Naive thymus-derived CD4-positive, alpha-beta T cell (primary cell): ENCODE measurements at regions of chr10 and their contacts with region 1.

Region 1: GRCh38 chr10:11515596-11516430 is 95.6 kb downstream of the USP6NL start:
- DNase-seq: peak in 7 of 9 donors; percentile 45 to 75 (median 64)
- ATAC-seq: peak; percentile 81
- H3K4me3 ChIP-seq: no peak overlapping the region
- H3K4me3 Mint-ChIP-seq: no peak overlapping the region
- H3K27ac ChIP-seq: no peak overlapping the region
- H3K27ac Mint-ChIP-seq: peak overlapping the region in 1 of 9 donors; percentile 33
- H3K4me1 ChIP-seq: peaks cover 0 to 5% of the 10 kb centered on the region in 2 donors
- H3K4me1 Mint-ChIP-seq: peaks cover 0 to 16% (median 4%) of the 10 kb centered on the region in 7 donors
- H3K27me3 ChIP-seq: no peaks in the 10 kb centered on the region
- H3K27me3 Mint-ChIP-seq: peaks cover 0 to 36% (median 0%) of the 10 kb centered on the region in 5 donors

Region 2: DNA sequence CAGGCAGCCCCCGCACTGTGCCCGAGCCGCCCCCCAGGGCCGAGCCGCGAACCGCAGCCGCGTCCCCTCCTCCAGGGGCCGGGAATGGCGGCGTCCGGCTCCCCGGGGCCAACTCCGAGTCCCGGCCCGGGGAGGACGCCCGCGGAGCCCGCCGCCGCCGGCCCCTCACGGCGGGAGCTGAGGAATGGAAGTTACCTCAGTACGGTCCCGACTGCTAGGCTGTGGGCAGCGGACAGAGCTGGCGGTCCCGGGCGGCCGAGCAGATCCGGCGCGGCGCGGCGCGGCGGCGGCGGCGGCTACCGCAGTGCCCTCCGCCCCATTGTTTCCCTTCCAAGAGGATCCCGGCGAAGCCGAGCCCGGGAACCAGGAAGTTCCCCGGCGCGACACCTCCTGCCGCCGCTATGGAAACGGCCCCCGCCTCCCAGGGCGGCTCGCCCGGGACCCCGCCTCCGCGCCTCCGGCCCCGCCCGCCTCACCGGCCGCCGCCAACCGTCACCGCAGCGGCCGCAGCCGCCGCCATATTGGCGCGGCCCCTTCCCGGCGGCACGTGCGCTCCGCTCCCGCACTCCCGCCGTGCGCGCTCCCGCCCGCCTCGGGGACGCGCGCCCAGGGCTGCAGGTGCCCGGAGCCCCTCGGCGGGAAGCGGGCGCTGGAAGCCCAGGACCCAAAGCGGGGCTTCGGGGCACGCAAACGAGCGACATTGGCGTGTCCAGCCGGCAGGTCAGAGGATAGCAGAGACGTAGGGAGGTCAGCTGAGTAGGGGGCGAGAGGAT is 95.6 kb after region 1 on chr10 and contains the start of gene USP6NL:
- CTCF ChIA-PET with region 1: interaction called, 8 read pairs
- POLR2A ChIA-PET with region 1: no interaction called
- intact Hi-C with region 1: loop called in 1 of 2 experiments (anchors 5 kb)
- DNase-seq: peak; percentile 44 to 75 (median 59)
- ATAC-seq: peak; percentile 84
- H3K4me3 ChIP-seq: peak within 1 kb of the TSS; percentile 70
- H3K4me3 Mint-ChIP-seq: peak within 1 kb of the TSS; percentile 86 to 98 (median 94)
- H3K27ac ChIP-seq: peak within 1 kb of the TSS; percentile 69
- H3K27ac Mint-ChIP-seq: peak within 1 kb of the TSS; percentile 62 to 97 (median 94)
- H3K4me1 ChIP-seq: peaks cover 0 to 9% of the 10 kb centered on the region in 2 donors
- H3K4me1 Mint-ChIP-seq: peaks cover 24 to 60% (median 50%) of the 10 kb centered on the region in 7 donors
- H3K27me3 ChIP-seq: no peaks in the 10 kb centered on the region
- H3K27me3 Mint-ChIP-seq: peaks cover 0 to 62% (median 0%) of the 10 kb centered on the region in 5 donors
- total RNA-seq, gene USP6NL: 0.70 to 6.6 (median 5.0) TPM

Region 3: DNA sequence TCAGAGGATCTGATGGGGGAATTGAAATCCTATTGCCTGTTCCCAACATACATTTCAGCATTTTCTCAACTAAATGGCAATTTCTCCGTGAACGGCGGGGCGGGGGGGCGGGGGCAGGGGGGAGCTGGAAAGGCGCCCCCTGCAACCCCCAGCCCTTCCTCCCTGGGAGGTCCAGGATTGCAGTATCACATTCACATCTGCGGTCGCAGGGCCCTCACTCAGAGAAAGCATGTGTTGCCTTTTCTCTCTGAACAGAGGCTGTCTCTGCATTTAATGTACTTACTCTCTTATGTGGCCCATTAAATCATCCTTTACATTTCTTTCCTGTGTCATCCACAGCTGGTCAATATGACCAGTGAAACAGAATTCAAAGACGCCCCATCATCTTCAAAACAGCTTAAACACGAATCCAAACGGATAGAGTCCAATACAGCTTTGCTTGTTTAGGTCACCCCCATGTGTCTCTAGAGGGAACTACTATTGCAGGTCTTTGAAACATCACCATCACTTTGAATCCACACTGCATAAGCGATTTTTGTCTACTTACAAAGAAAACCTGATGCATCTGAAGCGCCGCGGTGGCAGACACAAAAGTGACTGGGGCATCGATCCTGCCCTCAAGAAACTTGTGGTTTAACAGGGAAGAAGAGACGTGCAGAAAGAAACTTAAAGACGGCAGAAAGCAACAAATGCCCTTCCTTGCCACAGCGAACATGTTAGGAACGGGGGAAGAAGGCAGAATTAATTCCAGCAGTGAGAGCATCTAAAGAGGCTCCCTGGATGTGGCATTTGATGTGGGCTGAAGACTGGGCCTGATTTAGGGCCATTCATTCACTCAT is 209.3 kb after region 1 on chr10:
- CTCF ChIA-PET with region 1: interaction called, 23 read pairs
- POLR2A ChIA-PET with region 1: no interaction called
- intact Hi-C with region 1: loop called in 1 of 2 experiments (anchors 1 kb)
- DNase-seq: peak in 7 of 9 donors; percentile 25 to 61 (median 55)
- ATAC-seq: peak; percentile 81
- H3K4me3 ChIP-seq: no peak overlapping the region
- H3K4me3 Mint-ChIP-seq: peak overlapping the region in 1 of 10 donors; percentile 44
- H3K27ac ChIP-seq: no peak overlapping the region
- H3K27ac Mint-ChIP-seq: peak overlapping the region in 1 of 9 donors; percentile 13
- H3K4me1 ChIP-seq: no peaks in the 10 kb centered on the region
- H3K4me1 Mint-ChIP-seq: peaks cover 0 to 8% (median 5%) of the 10 kb centered on the region in 7 donors
- H3K27me3 ChIP-seq: no peaks in the 10 kb centered on the region
- H3K27me3 Mint-ChIP-seq: peaks cover 0 to 43% (median 5%) of the 10 kb centered on the region in 5 donors

Region 4: GRCh38 chr10:11757821-11758463 is 242.1 kb after region 1 on chr10:
- CTCF ChIA-PET with region 1: interaction called, 89 read pairs
- POLR2A ChIA-PET with region 1: no interaction called
- intact Hi-C with region 1: loop called (anchors 1 kb)
- DNase-seq: peak; percentile 66 to 86 (median 79)
- ATAC-seq: peak; percentile 95
- H3K4me3 ChIP-seq: no peak overlapping the region
- H3K4me3 Mint-ChIP-seq: no peak overlapping the region
- H3K27ac ChIP-seq: no peak overlapping the region
- H3K27ac Mint-ChIP-seq: peak overlapping the region in 4 of 9 donors; percentile 26 to 77 (median 54)
- H3K4me1 ChIP-seq: peaks cover 0 to 6% of the 10 kb centered on the region in 2 donors
- H3K4me1 Mint-ChIP-seq: peaks cover 4 to 6% (median 5%) of the 10 kb centered on the region in 7 donors
- H3K27me3 ChIP-seq: no peaks in the 10 kb centered on the region
- H3K27me3 Mint-ChIP-seq: peaks cover 0 to 8% (median 0%) of the 10 kb centered on the region in 5 donors

Region 5: DNA sequence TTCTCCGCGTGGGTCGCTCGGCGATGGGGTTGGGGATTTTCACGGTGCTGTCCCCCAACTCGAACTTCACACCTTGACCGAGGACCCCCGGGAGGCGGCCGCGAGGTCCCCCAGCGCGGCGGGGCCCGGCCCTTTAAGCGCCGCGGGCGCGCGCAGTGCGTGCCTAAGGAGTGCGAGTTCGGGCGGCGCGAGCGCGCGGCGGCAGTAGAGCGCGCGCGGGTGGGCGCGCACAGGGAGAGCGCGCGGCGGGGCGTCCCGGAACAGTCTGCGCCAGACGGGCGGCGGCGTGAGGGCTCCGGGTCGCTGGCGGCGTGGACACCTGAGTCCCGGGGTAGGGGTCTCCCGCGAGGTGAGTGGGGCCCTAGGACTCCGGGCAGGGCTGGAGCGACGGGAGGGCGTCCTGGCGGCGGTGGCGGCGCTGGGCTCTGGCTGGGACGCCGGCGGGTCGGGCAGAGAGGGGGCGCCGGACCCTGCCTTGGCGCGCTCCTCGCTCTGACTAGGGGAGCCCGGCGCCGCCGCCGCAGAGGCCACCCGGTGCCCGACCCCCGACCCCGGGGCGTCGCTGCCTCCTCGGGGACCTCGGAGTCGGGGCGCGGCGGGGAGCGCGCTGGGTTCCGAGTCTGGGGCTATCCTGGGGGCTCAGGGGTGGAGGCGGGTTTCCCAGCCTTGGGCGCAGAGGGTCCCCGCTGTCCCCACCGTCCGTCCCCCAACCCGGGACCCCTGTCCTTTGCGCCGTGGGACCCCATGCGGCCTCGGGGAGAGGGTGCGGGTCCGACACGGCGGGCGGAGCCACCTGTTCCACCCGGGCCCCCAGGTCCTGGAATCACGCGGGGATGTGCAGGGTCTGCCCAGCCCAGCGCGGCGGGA is 307.5 kb after region 1 on chr10 and contains the start of gene PROSER2:
- CTCF ChIA-PET with region 1: interaction called, 3 read pairs
- POLR2A ChIA-PET with region 1: no interaction called
- intact Hi-C with region 1: loop called (anchors 1 to 5 kb)
- DNase-seq: peak; percentile 16 to 71 (median 45)
- ATAC-seq: peak; percentile 95
- H3K4me3 ChIP-seq: peak within 1 kb of the TSS; percentile 56
- H3K4me3 Mint-ChIP-seq: peak within 1 kb of the TSS; percentile 64 to 94 (median 83)
- H3K27ac ChIP-seq: peak within 1 kb of the TSS; percentile 29
- H3K27ac Mint-ChIP-seq: peak within 1 kb of the TSS in 4 of 9 donors; percentile 14 to 81 (median 58)
- H3K4me1 ChIP-seq: peaks cover 0 to 3% of the 10 kb centered on the region in 2 donors
- H3K4me1 Mint-ChIP-seq: peaks cover 0 to 27% (median 17%) of the 10 kb centered on the region in 7 donors
- H3K27me3 ChIP-seq: peaks cover 0 to 3% of the 10 kb centered on the region in 2 donors
- H3K27me3 Mint-ChIP-seq: peaks cover 26 to 60% (median 45%) of the 10 kb centered on the region in 5 donors
- total RNA-seq, gene PROSER2: 0.07 to 4.9 (median 1.8) TPM

Region 6: GRCh38 chr10:11986593-11987216 is 470.9 kb after region 1 on chr10:
- CTCF ChIA-PET with region 1: no interaction called
- POLR2A ChIA-PET with region 1: no interaction called
- intact Hi-C with region 1: loop called (anchors 2 kb)
- DNase-seq: peak; percentile 31 to 68 (median 57)
- ATAC-seq: peak; percentile 76
- H3K4me3 ChIP-seq: no peak overlapping the region
- H3K4me3 Mint-ChIP-seq: no peak overlapping the region
- H3K27ac ChIP-seq: no peak overlapping the region
- H3K27ac Mint-ChIP-seq: peak overlapping the region in 4 of 9 donors; percentile 13 to 77 (median 43)
- H3K4me1 ChIP-seq: no peaks in the 10 kb centered on the region
- H3K4me1 Mint-ChIP-seq: peaks cover 6 to 10% (median 8%) of the 10 kb centered on the region in 7 donors
- H3K27me3 ChIP-seq: no peaks in the 10 kb centered on the region
- H3K27me3 Mint-ChIP-seq: no peaks in the 10 kb centered on the region